Activated CD4-positive, alpha-beta memory T cell treated with anti-CD3 and anti-CD28 coated beads for 36 hours (primary cell): ENCODE measurements at regions of chr6 and their contacts with region 1.

Region 1: GRCh38 chr6:11785774-11786579 is 7.4 kb upstream of the ADTRP start:
- DNase-seq: peak; percentile 80
- H3K4me3 Mint-ChIP-seq: peak overlapping the region; percentile 70
- H3K27ac Mint-ChIP-seq: peak overlapping the region; percentile 75
- H3K4me1 Mint-ChIP-seq: peaks cover 10% of the 10 kb centered on the region
- H3K27me3 Mint-ChIP-seq: peaks cover 10% of the 10 kb centered on the region

Region 2: GRCh38 chr6:11732036-11732631 is 53.8 kb before region 1 on chr6:
- CTCF ChIA-PET with region 1: interaction called, 4 read pairs
- POLR2A ChIA-PET with region 1: interaction called, 11 read pairs
- intact Hi-C with region 1: loop called (anchors 1 kb)
- DNase-seq: peak; percentile 85
- H3K4me3 Mint-ChIP-seq: peak overlapping the region; percentile 20
- H3K27ac Mint-ChIP-seq: peak overlapping the region; percentile 96
- H3K4me1 Mint-ChIP-seq: peaks cover 64% of the 10 kb centered on the region
- H3K27me3 Mint-ChIP-seq: no peaks in the 10 kb centered on the region

Region 3: DNA sequence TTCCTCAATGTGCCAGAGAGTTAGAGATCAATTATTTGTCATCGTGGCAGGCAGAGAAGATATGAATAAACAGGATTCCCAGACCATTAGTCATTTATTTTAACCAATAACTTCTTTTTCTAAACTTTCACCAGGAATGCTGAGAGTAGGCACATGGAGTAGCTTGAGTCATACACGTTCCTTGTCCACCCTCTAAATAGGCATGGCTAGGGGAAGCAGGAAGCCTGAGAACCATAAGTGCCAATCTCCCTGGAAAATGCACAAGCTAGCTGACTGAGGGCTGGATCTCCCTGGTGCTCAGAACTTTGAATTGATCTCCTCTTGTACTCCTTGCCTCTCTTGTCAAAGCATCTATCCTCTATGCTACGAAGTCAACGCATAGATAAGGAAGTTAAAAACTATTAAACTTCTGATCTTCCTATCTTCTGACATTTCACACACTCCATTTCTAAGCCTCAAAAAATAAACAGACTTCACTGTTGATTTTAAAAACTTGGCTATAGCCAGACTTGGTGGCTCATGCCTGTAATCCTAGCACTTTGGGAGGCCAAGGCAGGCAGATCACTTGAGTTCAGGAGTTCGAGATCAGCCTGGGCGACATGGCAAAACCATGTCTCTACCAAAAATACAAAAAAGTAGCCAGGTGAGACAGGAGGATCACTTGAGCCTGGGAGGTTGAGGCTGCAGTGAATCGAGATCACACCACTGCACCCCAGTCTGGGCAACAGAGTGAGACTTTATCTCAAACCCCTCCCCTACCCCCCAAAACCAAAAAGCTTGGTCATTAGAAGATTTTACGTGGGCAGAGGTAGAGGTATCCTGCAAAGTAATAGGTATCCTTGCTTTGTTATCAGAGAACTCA is 19.2 kb before region 1 on chr6:
- CTCF ChIA-PET with region 1: interaction called, 4 read pairs
- POLR2A ChIA-PET with region 1: interaction called, 6 read pairs
- intact Hi-C with region 1: loop called (anchors 2 kb)
- DNase-seq: no peak
- H3K4me3 Mint-ChIP-seq: no peak overlapping the region
- H3K27ac Mint-ChIP-seq: no peak overlapping the region
- H3K4me1 Mint-ChIP-seq: peaks cover 39% of the 10 kb centered on the region
- H3K27me3 Mint-ChIP-seq: peaks cover 8% of the 10 kb centered on the region

Region 4: GRCh38 chr6:11806561-11807317 is 20.8 kb after region 1 on chr6:
- CTCF ChIA-PET with region 1: no interaction called
- POLR2A ChIA-PET with region 1: no interaction called
- intact Hi-C with region 1: loop called (anchors 1 kb)
- DNase-seq: peak; percentile 41
- H3K4me3 Mint-ChIP-seq: peak overlapping the region; percentile 15
- H3K27ac Mint-ChIP-seq: peak overlapping the region; percentile 23
- H3K4me1 Mint-ChIP-seq: peaks cover 21% of the 10 kb centered on the region
- H3K27me3 Mint-ChIP-seq: peaks cover 1% of the 10 kb centered on the region

Region 5: GRCh38 chr6:11851390-11851789 is 65.4 kb after region 1 on chr6:
- CTCF ChIA-PET with region 1: no interaction called
- POLR2A ChIA-PET with region 1: no interaction called
- intact Hi-C with region 1: no loop called
- DNase-seq: no peak
- H3K4me3 Mint-ChIP-seq: no peak overlapping the region
- H3K27ac Mint-ChIP-seq: no peak overlapping the region
- H3K4me1 Mint-ChIP-seq: peaks cover 6% of the 10 kb centered on the region
- H3K27me3 Mint-ChIP-seq: no peaks in the 10 kb centered on the region

Region 6: DNA sequence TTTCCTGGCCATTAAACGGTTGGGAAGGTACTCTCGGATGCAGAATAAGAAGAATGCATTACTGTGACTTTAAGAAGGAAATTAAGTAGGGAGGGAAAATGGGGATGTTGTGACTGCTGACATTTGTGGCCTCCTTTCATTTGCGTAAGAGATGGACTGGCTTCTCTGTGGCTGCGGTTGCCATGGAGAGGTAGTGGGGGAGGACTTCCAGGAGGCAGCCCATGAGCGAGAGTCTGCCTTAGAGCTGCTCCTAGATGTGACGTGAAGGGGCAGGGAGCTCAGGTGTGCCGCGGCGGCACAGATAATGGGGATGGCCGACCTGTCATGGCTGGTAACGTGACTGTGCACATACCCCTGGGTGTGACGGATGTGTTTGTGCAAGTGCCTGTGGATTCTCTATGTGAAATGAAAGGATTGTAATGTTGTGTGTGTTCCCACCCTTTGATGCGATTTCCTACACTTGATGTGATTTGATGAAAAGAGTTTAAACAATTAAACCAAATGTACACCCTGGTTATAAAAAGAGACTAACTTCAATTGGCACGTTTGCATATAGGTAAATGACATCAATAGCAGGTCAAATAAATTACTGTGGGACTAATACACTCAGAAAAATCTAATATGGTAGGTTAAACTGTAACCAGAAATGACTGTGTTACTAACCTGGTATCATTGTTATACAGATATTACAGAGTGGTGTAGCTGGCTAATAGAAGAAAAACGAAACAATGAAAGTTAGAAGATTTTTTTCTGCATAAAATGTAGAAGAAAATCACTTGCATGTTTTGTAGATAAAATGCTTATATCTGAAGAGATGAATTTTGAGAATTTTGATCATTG is 275.0 kb after region 1 on chr6:
- CTCF ChIA-PET with region 1: no interaction called
- POLR2A ChIA-PET with region 1: no interaction called
- intact Hi-C with region 1: loop called (anchors 5 kb)
- DNase-seq: peak; percentile 87
- H3K4me3 Mint-ChIP-seq: peak overlapping the region; percentile 76
- H3K27ac Mint-ChIP-seq: peak overlapping the region; percentile 84
- H3K4me1 Mint-ChIP-seq: peaks cover 65% of the 10 kb centered on the region
- H3K27me3 Mint-ChIP-seq: no peaks in the 10 kb centered on the region